CD14-positive monocyte (primary cell): ENCODE measurements at regions of chr16 and their contacts with region 1.

Region 1: DNA sequence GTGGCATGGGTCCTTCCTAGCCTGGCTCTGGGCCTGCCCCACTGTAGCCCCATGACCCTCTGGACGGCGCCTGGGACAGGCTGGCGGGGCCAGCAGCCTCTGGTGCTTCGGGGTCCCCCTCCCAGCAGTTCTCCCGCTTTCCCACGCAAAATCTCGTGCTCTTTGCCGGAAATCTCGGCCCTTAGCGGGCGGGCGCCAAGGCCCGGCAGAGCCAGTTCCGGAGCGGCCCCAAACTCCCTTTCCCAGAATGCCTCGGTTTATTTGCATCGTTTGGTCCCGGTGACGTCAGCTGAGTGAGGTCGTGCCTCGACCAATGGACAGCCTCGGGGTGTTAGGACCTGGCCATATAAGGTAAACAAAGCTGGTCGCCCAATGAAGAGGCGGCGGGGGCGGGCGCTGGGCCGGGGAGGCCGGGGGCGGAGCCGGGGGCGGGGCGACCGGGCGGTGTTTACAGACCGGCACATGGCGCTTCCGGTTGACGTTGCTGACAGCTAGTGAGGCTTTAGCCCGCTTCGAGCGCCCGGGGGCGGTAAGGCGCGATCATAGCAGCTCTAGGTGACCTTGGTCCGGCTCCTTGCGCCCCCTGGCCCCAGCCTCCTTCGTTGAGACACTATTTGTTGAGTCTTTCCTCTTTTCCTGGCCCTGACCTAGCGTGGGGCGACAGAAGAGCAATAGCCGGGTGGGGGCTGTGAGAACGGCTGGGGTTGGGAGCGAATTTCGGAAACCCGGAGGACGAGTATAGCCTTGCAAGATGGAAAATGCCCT is 1.5 kb upstream of the UBALD1 start:
- DNase-seq: peak; percentile 99 to 100 (median 100)
- H3K4me3 ChIP-seq: peak overlapping the region; percentile 15 to 79 (median 56)
- H3K4me3 Mint-ChIP-seq: peak overlapping the region; percentile 82 to 95
- H3K27ac ChIP-seq: peak overlapping the region; percentile 93 to 94
- H3K27ac Mint-ChIP-seq: peak overlapping the region; percentile 96 to 99 (median 98)
- H3K4me1 ChIP-seq: peaks cover 47 to 52% of the 10 kb centered on the region in 2 donors
- H3K4me1 Mint-ChIP-seq: peaks cover 46% of the 10 kb centered on the region
- H3K27me3 ChIP-seq: no peaks in the 10 kb centered on the region
- H3K27me3 Mint-ChIP-seq: peaks cover 0 to 2% (median 0%) of the 10 kb centered on the region in 3 donors
- CTCF ChIP-seq: peak; percentile 46

Region 2: GRCh38 chr16:4416200-4417032 is 199.8 kb before region 1 on chr16 and contains the start of gene CORO7:
- intact Hi-C with region 1: loop called in 1 of 2 experiments (anchors 5 kb)
- DNase-seq: peak; percentile 85 to 93 (median 87)
- H3K4me3 ChIP-seq: peak within 1 kb of the TSS; percentile 67 to 96 (median 86)
- H3K4me3 Mint-ChIP-seq: peak within 1 kb of the TSS; percentile 97 to 98
- H3K27ac ChIP-seq: peak within 1 kb of the TSS; percentile 86 to 96
- H3K27ac Mint-ChIP-seq: peak within 1 kb of the TSS; percentile 95 to 99 (median 97)
- H3K4me1 ChIP-seq: peaks cover 50 to 62% of the 10 kb centered on the region in 2 donors
- H3K4me1 Mint-ChIP-seq: peaks cover 54% of the 10 kb centered on the region
- H3K27me3 ChIP-seq: no peaks in the 10 kb centered on the region
- H3K27me3 Mint-ChIP-seq: peaks cover 0 to 4% (median 0%) of the 10 kb centered on the region in 3 donors
- CTCF ChIP-seq: no peak
- polyA plus RNA-seq, gene CORO7: 44.7 to 181 (median 68.4) TPM

Region 3: DNA sequence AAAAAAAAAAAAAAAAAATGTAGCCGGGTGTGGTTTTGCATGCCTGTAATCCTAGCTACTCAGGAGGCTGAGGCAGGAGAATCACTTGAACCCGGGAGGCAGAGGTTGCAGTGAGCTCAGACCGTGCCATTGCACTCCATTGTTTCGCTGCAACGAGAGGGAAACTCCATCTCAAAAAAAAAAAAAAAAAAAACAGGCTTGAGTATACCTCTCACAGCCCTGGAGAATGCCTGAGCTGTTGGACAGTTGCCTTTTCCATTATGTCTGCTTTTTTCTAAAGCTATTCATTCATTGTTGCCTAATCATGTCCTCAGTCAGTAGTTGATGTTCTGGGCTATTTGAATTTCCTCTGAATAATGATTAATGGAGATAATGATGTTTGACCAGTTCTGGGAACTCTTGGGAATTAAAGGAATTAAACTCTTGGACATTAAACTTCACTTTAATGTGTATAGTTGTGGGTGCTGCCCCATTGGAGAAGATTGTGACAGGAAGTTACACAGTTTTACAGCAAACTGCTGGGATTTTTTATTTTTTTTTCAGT is 128.2 kb before region 1 on chr16:
- intact Hi-C with region 1: no loop called
- DNase-seq: no peak
- H3K4me3 ChIP-seq: no peak overlapping the region
- H3K4me3 Mint-ChIP-seq: no peak overlapping the region
- H3K27ac ChIP-seq: no peak overlapping the region
- H3K27ac Mint-ChIP-seq: peak overlapping the region in 1 of 7 donors; percentile 30
- H3K4me1 ChIP-seq: no peaks in the 10 kb centered on the region
- H3K4me1 Mint-ChIP-seq: peaks cover 2% of the 10 kb centered on the region
- H3K27me3 ChIP-seq: no peaks in the 10 kb centered on the region
- H3K27me3 Mint-ChIP-seq: no peaks in the 10 kb centered on the region
- CTCF ChIP-seq: no peak

Region 4: DNA sequence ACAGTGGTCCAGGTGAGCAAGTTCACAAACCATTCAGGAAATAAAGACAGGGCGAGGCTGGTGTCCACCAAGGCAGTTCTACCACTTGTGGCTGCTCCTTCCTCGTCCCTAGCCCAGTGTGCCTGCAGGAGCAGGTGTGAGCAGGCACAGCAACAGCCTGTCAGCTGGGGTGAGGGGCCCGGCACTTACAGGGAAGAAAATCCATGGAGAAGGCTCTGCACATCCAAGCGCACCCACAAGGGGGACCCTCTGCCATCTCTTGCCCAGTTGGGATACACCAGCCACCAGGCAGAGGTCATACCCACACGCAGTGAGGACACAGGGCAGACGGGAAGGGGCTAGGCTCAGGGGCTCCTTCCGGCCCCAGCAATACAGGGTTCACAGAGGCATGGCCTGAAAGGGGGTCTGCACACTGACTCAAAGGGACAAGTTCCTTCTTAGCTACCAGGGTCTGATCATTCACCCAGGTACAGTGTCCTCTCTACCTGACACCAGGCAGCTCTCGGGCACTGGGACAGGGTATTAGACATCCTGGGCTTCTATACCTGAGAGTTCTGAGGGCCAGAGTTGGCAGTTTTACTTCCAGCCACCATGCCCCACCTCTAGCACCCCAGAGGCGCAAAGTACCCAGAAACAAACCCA is 104.7 kb before region 1 on chr16:
- intact Hi-C with region 1: loop called in 1 of 2 experiments (anchors 10 kb)
- DNase-seq: peak in 2 of 3 donors; percentile 29 to 45
- H3K4me3 ChIP-seq: peak overlapping the region in 1 of 3 experiments; percentile 6
- H3K4me3 Mint-ChIP-seq: peak overlapping the region; percentile 50 to 69
- H3K27ac ChIP-seq: peak overlapping the region; percentile 9 to 62
- H3K27ac Mint-ChIP-seq: peak overlapping the region; percentile 56 to 87 (median 81)
- H3K4me1 ChIP-seq: peaks cover 59 to 63% of the 10 kb centered on the region in 2 donors
- H3K4me1 Mint-ChIP-seq: peaks cover 62% of the 10 kb centered on the region
- H3K27me3 ChIP-seq: no peaks in the 10 kb centered on the region
- H3K27me3 Mint-ChIP-seq: no peaks in the 10 kb centered on the region
- CTCF ChIP-seq: peak; percentile 61

Region 5: DNA sequence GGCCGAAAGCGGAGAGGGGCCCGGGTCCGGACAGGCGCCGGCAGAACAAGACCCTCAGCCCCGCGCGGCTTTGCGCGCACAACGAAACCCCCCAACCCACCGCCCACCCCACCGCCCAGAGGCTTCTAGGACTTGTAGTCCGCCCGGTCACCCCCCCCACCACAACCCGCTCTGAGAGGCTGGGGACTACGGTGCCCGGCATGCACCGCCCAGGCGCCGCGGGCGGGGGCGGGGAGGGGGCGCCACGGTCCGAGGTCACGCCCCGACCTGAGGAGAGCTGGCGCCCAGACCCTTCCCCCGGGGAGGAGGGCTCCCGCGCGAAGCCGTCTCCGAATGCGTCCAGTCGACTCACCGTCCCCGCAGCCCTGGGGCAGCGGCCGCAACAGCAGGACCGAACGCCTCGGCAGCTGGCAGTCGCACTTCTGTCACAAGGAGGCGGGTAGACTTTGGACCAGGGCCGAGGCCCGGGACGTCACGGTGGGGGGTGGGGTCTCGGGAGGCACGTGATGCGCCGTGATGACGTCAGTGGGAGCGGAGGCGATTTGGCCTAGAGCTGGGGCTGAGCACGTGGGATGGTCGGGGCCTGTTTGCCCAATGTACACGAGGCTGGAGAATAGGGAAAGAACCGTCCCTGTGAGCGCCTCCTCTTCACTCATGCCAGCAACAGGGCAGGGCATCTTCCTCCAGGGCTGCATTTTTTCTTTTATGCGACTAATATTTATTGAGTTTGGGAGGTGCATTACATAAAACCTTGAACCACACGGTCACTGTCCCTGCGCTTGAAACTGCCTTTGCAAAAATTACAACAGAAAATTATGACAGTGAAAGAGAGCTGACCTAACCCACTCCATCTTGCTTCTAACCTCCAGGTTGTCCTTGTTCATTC is 77.6 kb before region 1 on chr16 and contains the start of gene CDIP1:
- intact Hi-C with region 1: loop called in 1 of 2 experiments (anchors 2 kb)
- DNase-seq: peak; percentile 94 to 99 (median 99)
- H3K4me3 ChIP-seq: peak within 1 kb of the TSS; percentile 52 to 83 (median 57)
- H3K4me3 Mint-ChIP-seq: peak within 1 kb of the TSS; percentile 72 to 86
- H3K27ac ChIP-seq: peak within 1 kb of the TSS; percentile 77 to 87
- H3K27ac Mint-ChIP-seq: peak within 1 kb of the TSS; percentile 38 to 87 (median 80)
- H3K4me1 ChIP-seq: peaks cover 12 to 19% of the 10 kb centered on the region in 2 donors
- H3K4me1 Mint-ChIP-seq: peaks cover 22% of the 10 kb centered on the region
- H3K27me3 ChIP-seq: peaks cover 0 to 4% of the 10 kb centered on the region in 2 donors
- H3K27me3 Mint-ChIP-seq: peaks cover 9 to 12% (median 10%) of the 10 kb centered on the region in 3 donors
- CTCF ChIP-seq: no peak
- polyA plus RNA-seq, gene CDIP1: 8.6 to 11.2 (median 10.8) TPM

Region 6: DNA sequence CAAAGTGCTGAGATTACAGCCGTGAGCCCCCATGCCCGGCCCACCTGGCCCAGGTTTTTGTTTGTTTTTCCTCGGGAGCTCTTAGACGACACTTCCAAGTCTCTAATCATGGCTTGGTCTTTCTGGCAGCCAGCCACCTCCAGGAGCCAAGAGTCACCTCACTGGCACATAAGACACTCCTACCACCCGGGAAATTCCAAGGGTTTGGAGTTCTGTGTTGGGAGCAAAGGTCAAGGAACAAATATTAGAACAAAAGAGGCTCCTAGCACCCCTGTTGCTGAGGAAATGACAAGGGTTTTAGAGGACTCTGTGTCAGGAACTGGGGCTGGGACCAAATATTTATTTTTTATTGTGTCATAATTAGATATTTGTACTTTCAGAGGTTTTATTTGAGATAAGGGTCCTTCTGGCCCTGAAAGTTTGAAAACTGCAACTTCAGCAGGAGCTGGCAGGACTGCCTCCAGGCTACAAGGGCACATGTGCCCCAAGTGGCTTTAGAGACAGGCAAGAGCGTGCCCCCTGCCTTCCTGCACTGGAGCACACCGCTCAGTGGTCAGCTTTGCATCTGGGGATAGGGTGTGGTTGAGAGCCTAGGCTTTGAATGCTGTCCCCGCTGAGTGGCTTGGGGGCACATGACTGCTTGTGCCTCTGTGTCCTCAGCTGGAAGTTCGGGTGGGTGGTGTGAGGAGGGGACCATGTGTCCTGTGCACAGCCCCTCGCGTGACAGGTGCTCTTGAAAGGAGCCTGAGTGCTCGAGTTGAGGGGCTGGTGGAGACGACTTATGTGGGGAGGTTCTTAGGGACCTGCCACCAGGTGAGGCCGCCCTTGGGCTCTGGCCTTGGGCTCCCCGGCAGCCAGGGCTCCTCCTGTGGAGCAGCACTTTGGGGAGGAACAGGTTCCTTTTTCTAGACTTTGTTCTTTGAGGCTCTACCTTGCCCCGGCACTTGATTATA is 38.1 kb after region 1 on chr16:
- intact Hi-C with region 1: loop called in 1 of 2 experiments (anchors 5 kb)
- DNase-seq: no peak
- H3K4me3 ChIP-seq: no peak overlapping the region
- H3K4me3 Mint-ChIP-seq: no peak overlapping the region
- H3K27ac ChIP-seq: peak overlapping the region in 1 of 2 donors; percentile 8
- H3K27ac Mint-ChIP-seq: peak overlapping the region in 3 of 7 donors; percentile 12 to 42 (median 24)
- H3K4me1 ChIP-seq: peaks cover 4 to 11% of the 10 kb centered on the region in 2 donors
- H3K4me1 Mint-ChIP-seq: peaks cover 9% of the 10 kb centered on the region
- H3K27me3 ChIP-seq: no peaks in the 10 kb centered on the region
- H3K27me3 Mint-ChIP-seq: peaks cover 0 to 2% (median 0%) of the 10 kb centered on the region in 3 donors
- CTCF ChIP-seq: no peak